ENCODE measurements at regions of chr14 and their contacts with region 1.

Region 1: DNA sequence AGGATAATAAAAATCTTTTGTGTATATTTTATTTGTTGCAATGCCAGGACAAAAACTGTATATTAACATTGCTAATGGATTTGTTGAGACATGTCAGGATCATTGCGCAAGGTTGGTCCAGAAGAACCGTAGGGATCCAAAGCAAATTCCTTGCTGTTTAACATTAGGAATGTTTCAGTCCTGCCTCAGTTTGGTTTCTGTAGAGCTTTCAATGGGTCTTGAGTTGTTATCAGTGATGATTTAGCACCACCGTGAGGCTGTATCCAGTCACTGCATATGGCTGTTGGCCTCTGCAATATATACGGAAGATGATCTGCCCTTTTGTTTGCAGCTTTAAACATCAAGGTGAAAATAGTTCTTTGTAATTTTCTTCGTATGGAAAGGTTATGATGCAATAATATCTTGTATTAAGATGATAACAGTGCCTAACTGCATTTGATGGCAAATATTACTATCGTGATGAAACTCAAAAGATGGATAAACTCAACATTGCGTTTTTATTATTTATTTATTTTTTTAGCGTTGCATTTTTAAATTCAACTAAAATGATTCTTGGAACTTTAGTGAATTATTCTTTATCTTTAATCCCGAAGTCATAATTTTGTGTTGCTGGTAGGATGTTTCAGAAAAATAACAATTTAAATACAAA is 231.2 kb downstream of the AKAP6 start:
- DNase-seq: peak; percentile 82
- ATAC-seq: peak; percentile 98
- H3K4me3 ChIP-seq: no peak overlapping the region
- H3K27ac ChIP-seq: no peak overlapping the region
- H3K4me1 ChIP-seq: no peaks in the 10 kb centered on the region
- H3K27me3 ChIP-seq: no peaks in the 10 kb centered on the region
- CTCF ChIP-seq: peak; percentile 98
- EP300 ChIP-seq: no peak
- POLR2A ChIP-seq: no peak
- RAD21 ChIP-seq: peak; percentile 87

Region 2: DNA sequence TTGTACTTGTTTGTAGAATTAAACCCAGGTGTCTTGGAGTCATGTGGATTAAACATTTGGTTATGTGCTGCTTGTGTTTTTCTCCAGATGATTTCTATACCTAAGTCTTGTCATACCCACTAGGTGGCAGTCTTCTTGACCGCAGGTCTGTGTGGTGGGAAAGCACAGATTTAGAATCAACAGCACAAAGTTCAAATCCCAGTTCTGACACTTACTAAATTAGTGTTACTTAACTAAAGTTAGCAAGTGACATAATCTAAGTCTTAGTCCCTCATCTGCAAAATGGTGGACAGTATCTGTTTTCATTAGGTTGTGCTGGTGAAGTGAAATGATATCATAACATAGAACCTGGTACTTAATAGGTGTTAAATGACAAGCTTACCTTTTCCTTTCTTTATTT is 634.2 kb before region 1 on chr14:
- CTCF ChIA-PET with region 1: interaction called, 10 read pairs
- POLR2A ChIA-PET with region 1: no interaction called
- in situ Hi-C with region 1: loop called (anchors 10 kb)
- intact Hi-C with region 1: loop called (anchors 2 kb)
- DNase-seq: peak; percentile 87
- ATAC-seq: peak; percentile 80
- H3K4me3 ChIP-seq: no peak overlapping the region
- H3K27ac ChIP-seq: no peak overlapping the region
- H3K4me1 ChIP-seq: peaks cover 14% of the 10 kb centered on the region; the same call in 1 of the 2 replicates
- H3K27me3 ChIP-seq: no peaks in the 10 kb centered on the region; a peak in 1 of 5 replicates
- CTCF ChIP-seq: peak; percentile 86
- EP300 ChIP-seq: no peak
- POLR2A ChIP-seq: no peak
- RAD21 ChIP-seq: peak; percentile 85

Region 3: DNA sequence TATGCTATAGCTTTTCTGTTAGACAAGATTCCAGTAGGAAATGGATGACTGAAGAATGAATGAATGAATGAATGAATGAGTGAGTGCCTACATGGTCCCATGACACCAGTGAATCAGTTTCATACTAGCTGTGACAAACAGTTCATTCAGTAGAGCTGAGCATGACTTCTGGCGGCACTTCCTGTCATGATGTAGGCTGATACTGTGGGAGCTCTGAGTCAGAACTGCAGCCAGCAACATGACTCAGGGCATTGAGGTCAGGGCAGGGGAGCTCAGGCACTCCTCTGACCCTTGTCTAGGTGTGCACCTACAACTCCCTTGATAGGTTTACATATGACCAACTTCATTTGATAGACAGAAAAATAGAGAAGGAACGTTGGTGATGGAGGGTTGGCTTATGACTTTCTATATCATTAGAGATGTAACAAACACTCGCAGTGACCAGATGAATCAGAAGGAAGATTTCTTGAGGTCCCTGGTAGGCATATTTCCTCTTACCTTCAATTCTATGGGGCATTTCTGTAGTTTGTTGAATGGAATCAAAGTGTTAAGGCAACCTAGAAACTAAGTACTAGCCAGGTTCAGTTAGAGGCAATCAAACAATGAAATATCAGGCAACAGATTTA is 622.5 kb before region 1 on chr14:
- CTCF ChIA-PET with region 1: no interaction called
- POLR2A ChIA-PET with region 1: no interaction called
- in situ Hi-C with region 1: loop called (anchors 10 kb)
- intact Hi-C with region 1: no loop called
- DNase-seq: peak; percentile 98
- ATAC-seq: peak; percentile 88
- H3K4me3 ChIP-seq: no peak overlapping the region
- H3K27ac ChIP-seq: no peak overlapping the region
- H3K4me1 ChIP-seq: peaks cover 59% of the 10 kb centered on the region
- H3K27me3 ChIP-seq: no peaks in the 10 kb centered on the region
- CTCF ChIP-seq: no peak
- EP300 ChIP-seq: peak; percentile 33 to 84; a peak in 1 of 4 replicates
- POLR2A ChIP-seq: no peak
- RAD21 ChIP-seq: no peak

Region 4: GRCh38 chr14:32286602-32287001 is 273.7 kb before region 1 on chr14:
- CTCF ChIA-PET with region 1: no interaction called
- POLR2A ChIA-PET with region 1: no interaction called
- in situ Hi-C with region 1: no loop called
- intact Hi-C with region 1: loop called (anchors 10 kb)
- DNase-seq: no peak
- ATAC-seq: no peak
- H3K4me3 ChIP-seq: no peak overlapping the region
- H3K27ac ChIP-seq: no peak overlapping the region
- H3K4me1 ChIP-seq: no peaks in the 10 kb centered on the region
- H3K27me3 ChIP-seq: no peaks in the 10 kb centered on the region; a peak in 1 of 5 replicates
- CTCF ChIP-seq: no peak
- EP300 ChIP-seq: no peak
- POLR2A ChIP-seq: no peak
- RAD21 ChIP-seq: no peak

Region 5: DNA sequence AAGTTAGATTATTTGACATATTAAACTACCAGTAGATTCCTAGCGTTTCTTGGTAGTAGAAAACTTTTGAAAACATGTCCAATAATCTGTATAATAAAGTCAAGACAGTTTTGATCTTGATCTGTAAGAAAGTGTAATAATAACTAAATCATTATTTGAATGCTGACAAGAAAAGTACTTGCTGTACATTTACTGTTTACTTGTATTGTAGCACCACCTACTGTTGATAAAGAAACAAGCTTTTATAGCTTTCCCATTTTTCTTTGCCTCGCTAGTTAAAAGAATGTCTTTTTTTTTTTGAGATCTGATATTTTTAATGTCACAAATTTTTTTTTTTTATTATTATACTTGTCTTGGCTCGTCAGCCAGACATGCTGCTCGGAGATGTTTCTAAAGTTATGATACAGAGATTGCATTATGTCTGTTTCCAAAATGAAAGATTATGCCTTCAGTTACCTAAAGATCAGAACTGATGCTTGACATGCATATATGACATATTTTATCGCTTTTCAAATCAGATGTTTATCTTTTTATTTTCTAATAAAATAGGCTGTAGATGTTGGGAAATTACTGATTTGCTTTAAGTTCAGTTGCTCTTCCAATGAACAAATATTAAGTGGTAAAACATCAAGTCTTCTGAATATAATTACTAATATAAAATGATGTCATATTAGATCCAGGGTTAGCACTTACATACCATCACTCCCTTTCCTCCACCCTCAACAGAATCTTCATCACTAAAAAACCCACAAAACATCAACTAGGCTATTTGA is 90.8 kb before region 1 on chr14:
- CTCF ChIA-PET with region 1: no interaction called
- POLR2A ChIA-PET with region 1: no interaction called
- in situ Hi-C with region 1: no loop called
- intact Hi-C with region 1: loop called (anchors 1 kb)
- DNase-seq: peak; percentile 63
- ATAC-seq: peak; percentile 60
- H3K4me3 ChIP-seq: no peak overlapping the region
- H3K27ac ChIP-seq: no peak overlapping the region
- H3K4me1 ChIP-seq: peaks cover 16% of the 10 kb centered on the region
- H3K27me3 ChIP-seq: no peaks in the 10 kb centered on the region
- CTCF ChIP-seq: peak; percentile 67
- EP300 ChIP-seq: no peak
- POLR2A ChIP-seq: no peak
- RAD21 ChIP-seq: no peak

Region 6: DNA sequence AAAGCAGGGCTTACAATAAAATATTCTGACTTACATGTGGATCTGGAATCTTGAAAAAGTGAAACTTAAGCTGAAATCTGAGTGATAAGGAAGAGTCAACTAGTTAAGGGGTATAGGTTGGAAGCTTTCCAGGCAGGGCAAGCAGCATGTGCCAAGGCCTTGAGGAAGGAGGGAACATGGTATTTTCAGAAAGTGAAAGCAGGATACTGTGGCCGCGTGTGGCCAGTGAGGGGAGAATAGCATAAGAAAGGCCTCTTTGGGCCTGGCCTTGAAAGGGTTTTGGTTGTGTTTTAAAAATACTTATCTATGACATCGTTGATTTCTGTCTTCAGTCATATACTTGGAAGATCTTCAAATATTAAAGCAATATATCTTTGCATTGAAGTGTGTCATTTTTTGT is 17.8 kb before region 1 on chr14:
- CTCF ChIA-PET with region 1: no interaction called
- POLR2A ChIA-PET with region 1: no interaction called
- in situ Hi-C with region 1: no loop called
- intact Hi-C with region 1: no loop called
- DNase-seq: no peak
- ATAC-seq: no peak
- H3K4me3 ChIP-seq: no peak overlapping the region
- H3K27ac ChIP-seq: no peak overlapping the region
- H3K4me1 ChIP-seq: no peaks in the 10 kb centered on the region
- H3K27me3 ChIP-seq: no peaks in the 10 kb centered on the region
- CTCF ChIP-seq: no peak
- EP300 ChIP-seq: no peak
- POLR2A ChIP-seq: no peak
- RAD21 ChIP-seq: no peak